Motor neuron (in vitro differentiated cells): ENCODE measurements at regions of chr17 and their contacts with region 1.

Region 1: DNA sequence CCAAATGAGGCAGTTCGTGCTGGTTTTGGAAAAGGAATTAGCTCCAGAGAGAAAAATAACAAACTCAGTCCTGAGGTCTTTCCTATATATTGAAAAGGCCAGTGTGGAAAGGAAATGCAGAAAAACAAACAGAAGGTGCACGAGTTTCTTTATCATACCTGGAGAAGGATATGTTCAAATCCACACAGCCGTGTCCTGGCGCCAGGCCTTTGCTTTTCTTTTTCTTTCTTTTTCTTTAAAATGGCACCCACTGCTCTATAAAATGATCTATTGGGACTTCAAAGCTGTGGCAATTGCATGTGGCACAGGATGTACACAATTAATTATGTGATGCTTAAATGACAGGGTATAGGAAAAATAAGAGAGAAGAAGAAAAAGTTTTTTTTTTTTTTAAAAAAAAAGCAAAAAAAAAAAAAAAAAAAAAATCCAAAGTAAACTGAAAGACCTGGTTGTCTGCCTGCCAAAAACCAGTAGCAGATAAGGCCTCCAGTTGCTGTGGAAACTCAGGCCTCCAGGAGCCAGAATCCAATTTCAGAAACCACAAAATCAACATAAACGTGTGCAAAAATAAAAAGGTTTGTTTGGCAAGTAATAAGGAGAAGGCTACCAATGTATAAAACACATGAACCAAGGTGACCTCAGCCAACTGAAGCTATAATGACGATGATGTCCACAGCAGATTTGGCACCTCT is 957.6 kb upstream of the SOX9 start:
- ATAC-seq: peak in 1 of 8 experiments; percentile 32
- H3K4me3 ChIP-seq: no peak overlapping the region
- H3K27ac ChIP-seq: no peak overlapping the region
- H3K4me1 ChIP-seq: no peaks in the 10 kb centered on the region

Region 2: GRCh38 chr17:71273441-71273840 is 110.2 kb after region 1 on chr17:
- in situ Hi-C with region 1: no loop called
- ATAC-seq: no peak
- H3K4me3 ChIP-seq: no peak overlapping the region
- H3K27ac ChIP-seq: no peak overlapping the region
- H3K4me1 ChIP-seq: no peaks in the 10 kb centered on the region

Region 3: DNA sequence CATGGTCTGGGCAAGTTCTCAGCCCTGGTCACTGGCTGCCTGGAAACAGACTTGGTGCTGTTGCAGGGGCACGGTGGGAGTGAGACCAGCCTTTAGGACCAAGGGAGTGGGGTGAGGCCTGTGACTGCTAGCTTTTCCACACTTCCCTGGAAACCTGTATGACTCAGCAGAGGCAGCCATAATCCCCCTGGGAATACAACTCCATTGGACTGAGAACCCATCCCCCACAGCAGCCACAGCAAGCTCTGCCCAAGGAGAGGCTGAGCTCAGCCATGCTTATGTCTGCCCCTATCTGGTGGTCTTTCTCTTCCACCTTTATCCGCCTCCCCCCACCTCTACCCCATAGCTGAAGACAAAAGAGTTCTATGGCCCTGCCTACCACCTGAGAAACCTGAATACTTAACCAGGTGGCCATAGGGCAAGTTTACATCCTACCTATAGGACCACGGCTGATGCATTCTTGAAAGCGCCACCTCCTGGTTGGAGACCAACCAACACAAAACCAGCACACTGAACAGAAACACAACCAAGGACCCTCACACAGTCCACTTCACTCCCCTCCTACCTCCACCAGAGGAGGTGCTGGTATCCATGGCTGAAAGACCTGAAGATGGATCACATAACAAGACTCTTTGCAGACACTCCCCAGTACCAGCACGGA is 141.4 kb after region 1 on chr17:
- in situ Hi-C with region 1: loop called in 1 of 9 experiments (anchors 25 kb)
- ATAC-seq: peak in 1 of 8 experiments; percentile 18
- H3K4me3 ChIP-seq: no peak overlapping the region
- H3K27ac ChIP-seq: no peak overlapping the region
- H3K4me1 ChIP-seq: no peaks in the 10 kb centered on the region